ENCODE measurements at regions of chr6 and their contacts with region 1.

Region 1: GRCh38 chr6:16206595-16207037 is 31.8 kb upstream of the GMPR start:
- DNase-seq: peak in 1 of 2 donors; percentile 75
- ATAC-seq: peak; percentile 52 to 94 (median 80)
- H3K4me3 ChIP-seq: no peak overlapping the region
- H3K27ac ChIP-seq: peak overlapping the region in 2 of 10 donors; percentile 17 to 64
- H3K4me1 ChIP-seq: peaks cover 0 to 16% (median 8%) of the 10 kb centered on the region in 9 donors
- H3K27me3 ChIP-seq: peaks cover 0 to 7% (median 0%) of the 10 kb centered on the region in 7 donors
- CTCF ChIP-seq: peak; percentile 86 to 99 (median 97)

Region 2: GRCh38 chr6:15682965-15683822 is 523.4 kb before region 1 on chr6:
- intact Hi-C with region 1: loop called in 1 of 10 experiments (anchors 10 kb)
- DNase-seq: no peak
- ATAC-seq: no peak
- H3K4me3 ChIP-seq: no peak overlapping the region
- H3K27ac ChIP-seq: no peak overlapping the region
- H3K4me1 ChIP-seq: no peaks in the 10 kb centered on the region
- H3K27me3 ChIP-seq: no peaks in the 10 kb centered on the region
- CTCF ChIP-seq: no peak

Measured in heart right ventricle (tissue), 16 donors.